Activated CD4-positive, alpha-beta T cell treated with anti-CD3 and anti-CD28 coated beads for 36 hours (primary cell): ENCODE measurements at regions of chr18 and their contacts with region 1.

Region 1: GRCh38 chr18:26710470-26711096 is 154.9 kb downstream of the AQP4 start:
- DNase-seq: peak; percentile 28
- ATAC-seq: peak; percentile 39
- H3K4me3 Mint-ChIP-seq: no peak overlapping the region
- H3K27ac Mint-ChIP-seq: no peak overlapping the region
- H3K4me1 Mint-ChIP-seq: peaks cover 3% of the 10 kb centered on the region
- H3K27me3 Mint-ChIP-seq: peaks cover 5% of the 10 kb centered on the region

Region 2: DNA sequence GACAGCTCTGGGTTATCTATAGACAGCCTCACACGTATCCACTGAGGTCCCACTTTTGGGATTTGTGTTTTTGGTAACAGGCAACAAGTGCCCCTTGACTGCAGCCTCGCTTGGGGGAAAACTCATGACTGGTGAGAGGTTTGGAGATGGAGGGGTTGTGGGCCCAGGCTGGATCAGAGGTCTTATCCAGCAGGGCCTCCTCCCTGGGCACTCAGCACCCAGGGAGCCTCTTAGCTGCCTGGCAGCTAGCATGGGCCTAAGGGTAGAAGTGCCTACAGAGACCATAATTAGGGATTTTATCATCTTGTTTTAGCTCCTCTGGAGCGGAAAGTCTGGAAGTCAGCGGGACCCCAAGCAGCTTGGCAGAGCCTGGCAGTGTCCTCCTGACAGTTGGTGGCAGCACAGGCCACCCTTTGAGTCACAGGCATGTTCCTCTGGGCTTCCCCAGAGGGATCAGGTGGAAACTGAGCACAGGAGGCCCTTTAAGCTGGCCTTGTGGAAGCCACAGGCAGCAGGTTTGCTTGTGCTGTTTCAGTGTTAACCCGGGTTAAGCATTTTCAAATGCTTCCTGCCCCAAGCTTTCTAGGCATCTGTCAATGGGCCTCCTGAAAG is 305.3 kb before region 1 on chr18:
- CTCF ChIA-PET with region 1: no interaction called
- POLR2A ChIA-PET with region 1: no interaction called
- intact Hi-C with region 1: no loop called
- DNase-seq: peak; percentile 41
- ATAC-seq: peak; percentile 47
- H3K4me3 Mint-ChIP-seq: no peak overlapping the region
- H3K27ac Mint-ChIP-seq: no peak overlapping the region
- H3K4me1 Mint-ChIP-seq: no peaks in the 10 kb centered on the region
- H3K27me3 Mint-ChIP-seq: no peaks in the 10 kb centered on the region

Region 3: DNA sequence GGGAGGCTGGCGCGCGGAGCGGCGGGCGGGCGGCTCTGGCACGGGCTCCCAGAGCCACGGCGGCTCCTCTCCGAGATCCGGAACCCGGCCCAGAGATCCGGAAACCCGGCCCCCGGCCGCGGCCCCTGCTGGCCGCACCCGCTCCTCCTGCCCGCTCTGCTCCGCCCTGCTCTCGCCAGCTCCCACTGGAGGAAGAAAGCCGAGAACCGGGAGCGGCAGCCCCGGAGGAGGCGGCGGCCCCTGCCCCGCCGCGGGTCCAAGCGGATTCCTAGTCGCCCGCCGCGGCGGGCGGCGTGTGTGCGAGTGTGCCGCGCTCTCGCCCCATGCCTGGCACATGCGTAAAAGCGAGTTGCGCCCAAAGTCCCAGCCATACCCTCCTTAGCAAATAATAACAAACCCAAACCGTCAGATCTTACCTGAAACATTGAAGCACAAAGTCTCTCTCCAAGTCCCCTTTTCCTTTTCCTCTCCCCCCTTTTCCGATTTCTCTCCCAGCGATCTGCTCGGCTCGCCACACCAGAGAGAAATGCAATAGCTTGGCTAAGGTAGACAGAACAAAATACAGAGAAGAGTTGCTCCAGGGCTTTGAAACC is 53.5 kb before region 1 on chr18:
- CTCF ChIA-PET with region 1: no interaction called
- POLR2A ChIA-PET with region 1: no interaction called
- intact Hi-C with region 1: no loop called
- DNase-seq: peak; percentile 32
- ATAC-seq: peak; percentile 16
- H3K4me3 Mint-ChIP-seq: peak overlapping the region; percentile 69
- H3K27ac Mint-ChIP-seq: no peak overlapping the region
- H3K4me1 Mint-ChIP-seq: peaks cover 12% of the 10 kb centered on the region
- H3K27me3 Mint-ChIP-seq: peaks cover 66% of the 10 kb centered on the region

Region 4: GRCh38 chr18:26771524-26771923 is 60.9 kb after region 1 on chr18:
- CTCF ChIA-PET with region 1: no interaction called
- POLR2A ChIA-PET with region 1: no interaction called
- intact Hi-C with region 1: loop called in 1 of 2 experiments (anchors 10 kb)
- DNase-seq: no peak
- ATAC-seq: no peak
- H3K4me3 Mint-ChIP-seq: no peak overlapping the region
- H3K27ac Mint-ChIP-seq: no peak overlapping the region
- H3K4me1 Mint-ChIP-seq: no peaks in the 10 kb centered on the region
- H3K27me3 Mint-ChIP-seq: no peaks in the 10 kb centered on the region

Region 5: DNA sequence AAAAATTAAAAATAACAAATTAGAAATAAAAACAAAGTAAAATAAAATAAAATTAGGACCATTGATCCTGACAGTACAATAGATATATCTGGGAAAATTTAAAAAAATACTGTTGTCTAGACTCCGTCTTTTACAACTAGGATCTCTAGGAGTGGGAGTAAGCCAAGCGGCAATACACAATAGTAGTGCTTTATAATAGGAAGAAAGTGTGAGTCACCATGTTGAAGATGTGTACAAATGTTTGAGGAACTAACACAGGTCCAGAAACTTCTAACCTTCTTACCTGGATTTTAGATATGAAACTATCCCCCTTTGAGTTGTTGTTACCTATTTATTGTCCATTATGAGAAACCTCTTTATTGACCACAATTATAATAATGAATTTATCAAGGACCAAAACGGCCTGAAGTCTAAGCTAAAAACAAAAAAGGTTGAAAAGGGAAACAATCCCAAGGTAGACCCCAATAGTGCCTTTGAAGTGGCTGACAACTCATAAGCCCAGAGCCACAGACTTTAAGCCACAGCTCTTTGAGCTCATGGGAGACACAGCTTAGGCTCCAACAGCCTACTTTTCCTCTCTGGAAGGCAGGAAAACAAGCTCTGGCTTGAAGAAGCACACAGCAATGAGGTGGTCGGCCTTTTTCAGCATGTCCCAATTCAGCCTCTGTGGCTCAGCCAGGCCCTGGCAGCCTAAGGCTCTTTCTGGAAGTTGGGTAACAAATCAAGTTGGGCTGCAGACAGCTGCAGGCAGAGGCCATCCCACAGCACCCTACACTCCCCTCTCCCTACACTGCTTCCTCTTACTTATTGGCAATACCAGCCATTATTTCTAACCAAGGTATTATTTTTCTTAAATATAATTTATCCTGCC is 92.0 kb after region 1 on chr18:
- CTCF ChIA-PET with region 1: no interaction called
- POLR2A ChIA-PET with region 1: no interaction called
- intact Hi-C with region 1: no loop called
- DNase-seq: no peak
- ATAC-seq: no peak
- H3K4me3 Mint-ChIP-seq: no peak overlapping the region
- H3K27ac Mint-ChIP-seq: no peak overlapping the region
- H3K4me1 Mint-ChIP-seq: no peaks in the 10 kb centered on the region
- H3K27me3 Mint-ChIP-seq: no peaks in the 10 kb centered on the region

Region 6: GRCh38 chr18:26863122-26863879 is 152.7 kb after region 1 on chr18:
- CTCF ChIA-PET with region 1: no interaction called
- POLR2A ChIA-PET with region 1: no interaction called
- intact Hi-C with region 1: no loop called
- DNase-seq: no peak
- ATAC-seq: no peak
- H3K4me3 Mint-ChIP-seq: no peak overlapping the region
- H3K27ac Mint-ChIP-seq: no peak overlapping the region
- H3K4me1 Mint-ChIP-seq: no peaks in the 10 kb centered on the region
- H3K27me3 Mint-ChIP-seq: peaks cover 15% of the 10 kb centered on the region